PC-3 (cell line): ENCODE measurements at regions of chr3 and their contacts with region 1.

Region 1: DNA sequence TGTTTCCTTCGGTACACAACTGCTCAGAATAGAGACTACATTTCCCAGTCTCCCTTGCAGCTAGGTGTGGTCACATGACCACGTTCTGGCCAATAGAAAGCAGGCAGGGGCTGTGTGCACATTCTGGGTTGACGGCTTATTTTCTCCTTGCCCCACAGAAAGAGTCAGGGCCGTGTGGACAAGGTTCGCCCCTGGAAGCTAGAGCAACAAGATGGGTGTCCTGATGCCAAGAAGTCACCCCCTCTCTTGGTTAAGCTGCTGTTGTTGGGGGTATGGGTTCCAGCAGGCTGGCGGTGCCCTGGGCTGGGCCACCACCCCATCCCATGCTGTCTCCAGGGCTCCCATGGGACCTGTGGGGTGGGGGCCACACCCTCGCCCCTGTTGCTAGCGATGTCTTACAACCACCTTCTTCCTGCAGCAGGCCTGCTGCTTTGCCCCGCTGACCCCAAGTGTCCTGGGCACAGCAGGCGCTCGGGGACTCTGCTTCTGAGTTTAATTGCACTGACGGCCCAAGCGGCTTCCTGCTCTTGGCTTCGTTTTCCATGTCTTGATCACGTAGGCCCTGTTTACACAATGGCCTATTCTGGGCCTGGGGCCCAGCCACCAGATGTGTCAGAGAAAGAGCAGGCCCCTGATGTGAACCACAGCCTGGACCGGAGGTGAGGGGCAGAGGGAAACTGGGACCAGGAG is 24.9 kb downstream of the ABTB1 start:
- DNase-seq: peak; percentile 70
- ATAC-seq: peak; percentile 59
- H3K4me3 ChIP-seq: no peak overlapping the region
- H3K27ac ChIP-seq: peak overlapping the region; percentile 72
- H3K4me1 ChIP-seq: peaks cover 35% of the 10 kb centered on the region
- H3K27me3 ChIP-seq: no peaks in the 10 kb centered on the region
- CTCF ChIP-seq: no peak

Region 2: GRCh38 chr3:127590593-127591477 is 106.9 kb before region 1 on chr3 and contains the start of gene TPRA1:
- CTCF ChIA-PET with region 1: no interaction called
- POLR2A ChIA-PET with region 1: no interaction called
- intact Hi-C with region 1: loop called (anchors 10 kb)
- DNase-seq: peak; percentile 92
- ATAC-seq: peak; percentile 71
- H3K4me3 ChIP-seq: peak within 1 kb of the TSS; percentile 83
- H3K27ac ChIP-seq: peak within 1 kb of the TSS; percentile 84
- H3K4me1 ChIP-seq: peaks cover 21% of the 10 kb centered on the region
- H3K27me3 ChIP-seq: no peaks in the 10 kb centered on the region
- CTCF ChIP-seq: 0 out of 2 replicates have a peak, but pooled peaks have one; percentile 31
- total RNA-seq, gene TPRA1: 25.7 and 34.0 TPM in 2 replicates

Region 3: DNA sequence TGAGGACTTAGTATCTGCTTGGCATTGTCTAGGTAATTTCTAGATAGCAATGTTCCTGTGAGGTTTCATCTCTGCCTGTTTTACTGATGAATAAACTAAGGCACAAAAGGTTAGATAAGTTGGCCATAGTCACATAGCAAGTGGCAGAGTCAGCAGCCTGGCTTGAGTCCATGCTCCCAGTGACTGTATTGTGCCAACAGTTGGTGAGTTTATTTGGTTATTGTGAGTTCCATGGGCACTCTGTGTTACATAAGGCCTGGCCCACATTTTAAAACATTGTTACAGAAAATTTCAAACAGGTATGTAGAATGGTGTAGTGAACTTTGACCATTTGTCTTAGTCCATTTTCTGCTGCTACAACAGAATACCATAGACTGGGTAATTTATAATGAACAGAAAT is 84.3 kb before region 1 on chr3:
- CTCF ChIA-PET with region 1: no interaction called
- POLR2A ChIA-PET with region 1: no interaction called
- intact Hi-C with region 1: no loop called
- DNase-seq: peak; percentile 40
- ATAC-seq: peak; percentile 64
- H3K4me3 ChIP-seq: no peak overlapping the region
- H3K27ac ChIP-seq: no peak overlapping the region
- H3K4me1 ChIP-seq: peaks cover 16% of the 10 kb centered on the region
- H3K27me3 ChIP-seq: no peaks in the 10 kb centered on the region
- CTCF ChIP-seq: no peak

Region 4: GRCh38 chr3:127710155-127710941 is 12.7 kb after region 1 on chr3:
- CTCF ChIA-PET with region 1: no interaction called
- POLR2A ChIA-PET with region 1: no interaction called
- intact Hi-C with region 1: no loop called
- DNase-seq: peak; percentile 81
- ATAC-seq: peak; percentile 86
- H3K4me3 ChIP-seq: no peak overlapping the region
- H3K27ac ChIP-seq: peak overlapping the region; percentile 69
- H3K4me1 ChIP-seq: peaks cover 33% of the 10 kb centered on the region
- H3K27me3 ChIP-seq: no peaks in the 10 kb centered on the region
- CTCF ChIP-seq: no peak

Region 5: DNA sequence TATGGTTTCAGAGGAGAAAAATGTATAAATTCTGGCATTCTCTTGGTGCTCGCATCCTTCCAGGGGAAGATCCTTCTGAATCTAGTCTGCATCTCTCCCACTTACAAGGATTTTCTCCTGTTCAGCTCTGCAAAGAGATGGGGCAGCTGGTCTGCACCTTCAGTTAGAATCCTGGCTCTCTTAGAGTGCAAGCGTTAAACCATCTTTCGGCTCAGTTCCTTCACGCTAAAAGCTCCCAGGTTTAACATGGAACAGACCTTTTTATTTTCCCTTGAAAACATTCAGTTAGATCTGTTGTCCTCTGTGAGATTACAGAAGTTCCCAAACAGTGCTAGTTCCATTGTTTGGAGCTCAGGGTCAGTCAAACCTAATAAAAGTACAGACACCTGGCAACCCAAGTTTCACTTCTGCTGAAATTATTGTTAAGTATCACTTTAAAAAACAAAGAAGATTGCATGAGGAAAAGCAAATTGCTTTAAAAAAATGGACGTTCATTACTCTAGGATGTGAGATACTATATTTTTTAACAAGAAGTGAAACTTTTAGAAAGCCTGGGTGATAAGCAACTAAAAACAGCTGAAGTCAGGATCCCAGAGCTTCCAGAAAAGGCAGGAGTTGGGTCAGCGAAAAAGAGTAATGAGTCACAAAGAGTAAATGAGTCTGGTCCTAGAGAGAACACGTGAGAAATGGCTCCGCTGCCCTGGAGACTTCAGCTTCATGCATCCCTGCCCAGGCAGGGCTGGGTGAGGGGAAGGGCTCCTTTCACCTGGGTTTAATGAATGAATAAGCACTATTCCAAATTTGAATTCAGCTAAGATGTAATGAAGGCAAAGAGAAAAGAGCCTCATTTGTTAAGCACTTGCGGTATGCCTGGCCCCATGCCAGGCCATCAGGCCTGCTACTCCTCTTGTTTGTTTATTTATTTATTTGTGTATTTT is 38.3 kb after region 1 on chr3:
- CTCF ChIA-PET with region 1: interaction called, 8 read pairs
- POLR2A ChIA-PET with region 1: interaction called, 6 read pairs
- intact Hi-C with region 1: loop called (anchors 1 kb)
- DNase-seq: peak; percentile 54
- ATAC-seq: peak; percentile 10; the same call in 1 of the 2 replicates
- H3K4me3 ChIP-seq: no peak overlapping the region
- H3K27ac ChIP-seq: peak overlapping the region; percentile 95
- H3K4me1 ChIP-seq: peaks cover 42% of the 10 kb centered on the region
- H3K27me3 ChIP-seq: no peaks in the 10 kb centered on the region
- CTCF ChIP-seq: no peak

Region 6: DNA sequence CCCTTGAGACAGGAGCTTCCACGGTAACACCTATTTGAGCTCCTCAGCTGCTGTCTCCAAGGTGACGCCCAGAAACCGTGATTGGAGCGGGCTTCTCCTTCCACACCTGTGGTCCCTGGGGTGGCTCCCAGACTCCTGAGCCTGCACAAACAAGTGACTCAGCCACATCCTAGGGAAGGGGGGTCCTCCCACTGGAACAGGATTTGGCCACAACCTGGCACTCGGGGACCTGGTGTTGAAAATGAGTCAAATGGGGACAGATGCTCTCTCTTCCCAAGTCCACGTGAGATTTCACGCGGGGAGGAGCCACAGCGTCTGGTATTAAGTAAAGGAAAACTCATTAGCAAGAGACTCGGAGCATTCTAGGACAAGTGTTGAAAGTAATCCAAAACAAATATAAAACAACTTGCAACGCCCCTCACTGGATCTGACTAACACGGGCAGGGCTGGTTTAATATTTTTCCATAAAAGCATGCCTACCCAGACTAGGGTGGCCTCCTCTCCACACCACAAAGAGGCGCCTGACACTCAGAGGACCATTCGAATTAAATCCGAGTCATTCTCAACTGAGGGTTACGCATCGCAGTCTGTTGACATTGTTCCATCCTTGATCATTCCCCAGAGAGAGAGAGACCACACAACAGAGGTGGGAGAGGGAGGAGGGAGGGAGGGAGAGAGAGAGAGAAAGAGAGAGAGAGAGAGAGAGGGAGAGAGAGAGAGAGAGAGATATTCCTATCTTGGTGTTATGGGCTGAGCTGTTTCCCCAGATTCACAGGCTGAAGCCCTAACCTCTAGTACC is 50.2 kb after region 1 on chr3:
- CTCF ChIA-PET with region 1: no interaction called
- POLR2A ChIA-PET with region 1: no interaction called
- intact Hi-C with region 1: loop called (anchors 1 kb)
- DNase-seq: peak; percentile 92
- ATAC-seq: peak; percentile 73
- H3K4me3 ChIP-seq: peak overlapping the region; percentile 33; the same call in 1 of the 2 replicates
- H3K27ac ChIP-seq: peak overlapping the region; percentile 95
- H3K4me1 ChIP-seq: peaks cover 58% of the 10 kb centered on the region
- H3K27me3 ChIP-seq: no peaks in the 10 kb centered on the region
- CTCF ChIP-seq: peak; percentile 43

Region 7: GRCh38 chr3:127822698-127823425 is 125.2 kb after region 1 on chr3:
- CTCF ChIA-PET with region 1: no interaction called
- POLR2A ChIA-PET with region 1: no interaction called
- intact Hi-C with region 1: loop called (anchors 1 kb)
- DNase-seq: peak; percentile 29
- ATAC-seq: peak; percentile 51
- H3K4me3 ChIP-seq: peak overlapping the region; percentile 80
- H3K27ac ChIP-seq: peak overlapping the region; percentile 76
- H3K4me1 ChIP-seq: peaks cover 50% of the 10 kb centered on the region
- H3K27me3 ChIP-seq: no peaks in the 10 kb centered on the region
- CTCF ChIP-seq: no peak

Region 8: DNA sequence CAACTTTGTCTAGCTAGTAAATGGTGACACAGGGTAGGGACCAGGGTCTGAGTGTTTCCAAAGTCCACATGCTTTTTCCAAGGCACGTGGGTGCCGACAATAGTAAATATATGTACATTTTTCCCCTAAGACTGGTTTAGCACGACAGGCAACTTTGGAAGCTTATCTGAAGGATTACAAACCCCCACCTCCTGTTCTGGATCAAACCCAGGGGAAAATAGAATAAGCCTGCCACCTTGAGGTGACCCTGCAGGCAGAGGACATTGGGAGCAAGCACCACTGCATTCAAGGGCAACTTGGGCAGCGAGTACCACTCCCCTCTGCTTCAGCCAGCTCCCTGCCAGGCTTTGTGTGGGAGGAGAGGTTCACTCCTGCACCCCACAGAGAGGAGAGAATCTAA is 262.1 kb after region 1 on chr3:
- CTCF ChIA-PET with region 1: interaction called, 3 read pairs
- POLR2A ChIA-PET with region 1: no interaction called
- intact Hi-C with region 1: loop called (anchors 5 kb)
- DNase-seq: peak; percentile 62
- ATAC-seq: peak; percentile 32
- H3K4me3 ChIP-seq: no peak overlapping the region
- H3K27ac ChIP-seq: no peak overlapping the region
- H3K4me1 ChIP-seq: peaks cover 30% of the 10 kb centered on the region
- H3K27me3 ChIP-seq: no peaks in the 10 kb centered on the region
- CTCF ChIP-seq: peak; percentile 59

Region 9: GRCh38 chr3:128033102-128033501 is 335.4 kb after region 1 on chr3:
- CTCF ChIA-PET with region 1: no interaction called
- POLR2A ChIA-PET with region 1: no interaction called
- intact Hi-C with region 1: no loop called
- DNase-seq: peak; percentile 51
- ATAC-seq: peak; percentile 54; the same call in 1 of the 2 replicates
- H3K4me3 ChIP-seq: no peak overlapping the region
- H3K27ac ChIP-seq: no peak overlapping the region
- H3K4me1 ChIP-seq: no peaks in the 10 kb centered on the region; the same call in 1 of the 2 replicates
- H3K27me3 ChIP-seq: no peaks in the 10 kb centered on the region
- CTCF ChIP-seq: no peak